ENCODE measurements at regions of chr12 and their contacts with region 1.

Region 1: DNA sequence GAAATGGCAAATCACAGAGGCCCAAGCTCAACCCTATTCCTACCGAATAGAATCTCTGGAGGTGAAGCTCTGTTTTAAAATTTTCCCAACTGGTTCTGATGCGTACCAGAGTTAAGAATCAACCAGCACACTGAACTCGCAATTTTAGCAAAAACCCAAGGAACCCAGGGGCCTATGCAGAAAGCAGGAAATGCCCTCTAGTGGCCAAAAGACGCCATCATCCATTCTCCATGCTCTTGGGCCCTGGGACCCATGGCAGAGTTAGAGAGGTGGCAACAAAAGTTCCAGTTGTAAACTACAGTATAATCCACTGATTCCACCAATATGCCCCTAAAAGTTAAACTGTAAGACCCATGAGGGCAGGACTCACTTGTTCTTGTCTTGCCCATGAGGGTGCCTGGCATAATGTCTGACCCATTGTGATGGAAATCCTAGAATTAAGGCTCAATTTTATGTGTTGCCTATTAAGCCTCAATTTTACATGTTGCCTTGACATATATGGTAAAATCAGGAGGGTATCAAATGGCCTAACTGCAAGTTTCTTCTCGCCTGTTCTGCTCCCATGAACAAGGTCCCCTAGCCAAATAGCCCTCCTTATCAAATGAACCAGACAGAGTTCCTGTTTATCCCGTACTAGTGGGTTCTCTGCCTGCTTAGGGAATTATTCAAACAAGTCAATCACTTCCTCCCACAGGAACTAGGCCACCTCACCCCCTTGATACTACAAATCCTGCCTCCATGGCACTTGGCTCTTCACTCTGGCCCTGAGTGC is 137.5 kb upstream of the CPM start:
- DNase-seq: peak; percentile 69 to 80 (median 75)
- ATAC-seq: peak; percentile 57
- H3K4me3 ChIP-seq: no peak overlapping the region
- H3K27ac ChIP-seq: peak overlapping the region in 2 of 4 donors; percentile 13 to 40
- H3K4me1 ChIP-seq: peaks cover 56% of the 10 kb centered on the region
- H3K27me3 ChIP-seq: no peaks in the 10 kb centered on the region
- CTCF ChIP-seq: peak; percentile 59 to 85 (median 79)
- POLR2A ChIP-seq: no peak

Region 2: DNA sequence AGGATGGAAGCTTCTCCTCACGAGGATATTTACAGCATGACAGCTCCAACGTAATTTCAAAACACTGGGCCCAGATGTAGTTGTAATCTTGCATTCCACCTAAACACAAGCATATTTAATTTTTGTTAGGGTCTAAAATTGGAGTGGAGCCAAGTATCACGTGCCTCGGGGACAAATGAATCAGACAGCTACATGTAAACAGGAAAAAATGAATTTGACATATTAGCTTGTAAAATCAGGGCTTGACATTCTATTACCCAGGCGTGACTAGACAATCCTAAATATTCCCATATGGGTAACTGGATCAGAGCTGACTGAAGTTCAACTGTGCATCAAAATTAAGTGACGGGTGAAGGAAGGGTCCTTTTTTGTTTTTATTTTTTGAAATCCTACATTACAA is 203.6 kb before region 1 on chr12:
- intact Hi-C with region 1: loop called (anchors 5 kb)
- DNase-seq: no peak
- ATAC-seq: no peak
- H3K4me3 ChIP-seq: no peak overlapping the region
- H3K27ac ChIP-seq: no peak overlapping the region
- H3K4me1 ChIP-seq: peaks cover 4% of the 10 kb centered on the region
- H3K27me3 ChIP-seq: no peaks in the 10 kb centered on the region
- CTCF ChIP-seq: no peak
- POLR2A ChIP-seq: no peak

Region 3: DNA sequence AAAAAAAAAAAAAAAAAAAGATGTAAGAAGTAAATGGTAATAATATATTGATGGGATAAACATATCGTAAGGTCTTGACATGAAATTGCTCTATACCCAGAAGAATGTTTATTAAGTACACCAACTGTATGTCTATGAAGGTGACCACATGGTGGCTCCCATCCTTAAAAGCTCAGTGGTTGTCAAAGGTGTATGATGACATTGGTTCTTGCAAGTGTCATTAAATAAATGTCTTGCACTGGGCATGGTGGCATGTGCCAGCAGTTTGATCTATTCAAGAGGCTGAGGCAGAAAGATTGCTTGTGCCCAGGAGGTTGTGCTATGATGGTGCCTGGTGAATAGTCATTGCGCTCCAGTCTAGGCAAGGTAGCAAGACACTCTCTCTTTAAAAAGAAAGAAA is 525.2 kb after region 1 on chr12:
- intact Hi-C with region 1: no loop called
- DNase-seq: no peak
- ATAC-seq: no peak
- H3K4me3 ChIP-seq: no peak overlapping the region
- H3K27ac ChIP-seq: no peak overlapping the region
- H3K4me1 ChIP-seq: peaks cover 7% of the 10 kb centered on the region
- H3K27me3 ChIP-seq: no peaks in the 10 kb centered on the region
- CTCF ChIP-seq: no peak
- POLR2A ChIP-seq: no peak

Measured in body of pancreas (tissue), 4 donors.